ENCODE measurements at regions of chr3 and their contacts with region 1.

Region 1: GRCh38 chr3:16203031-16203430 is 28.6 kb downstream of the GALNT15 start:
- DNase-seq: no peak
- ATAC-seq: no peak
- H3K4me3 ChIP-seq: no peak overlapping the region
- H3K27ac ChIP-seq: no peak overlapping the region
- H3K4me1 ChIP-seq: no peaks in the 10 kb centered on the region
- H3K27me3 ChIP-seq: no peaks in the 10 kb centered on the region
- CTCF ChIP-seq: no peak

Region 2: GRCh38 chr3:16112910-16113504 is 90.0 kb before region 1 on chr3:
- intact Hi-C with region 1: no loop called
- DNase-seq: no peak
- ATAC-seq: peak; percentile 59 to 76 (median 70)
- H3K4me3 ChIP-seq: no peak overlapping the region
- H3K27ac ChIP-seq: peak overlapping the region; percentile 71
- H3K4me1 ChIP-seq: peaks cover 10% of the 10 kb centered on the region
- H3K27me3 ChIP-seq: no peaks in the 10 kb centered on the region
- CTCF ChIP-seq: no peak

Region 3: GRCh38 chr3:16173283-16174025 is 29.6 kb before region 1 on chr3:
- intact Hi-C with region 1: no loop called
- DNase-seq: no peak
- ATAC-seq: no peak
- H3K4me3 ChIP-seq: no peak overlapping the region
- H3K27ac ChIP-seq: peak overlapping the region; percentile 83
- H3K4me1 ChIP-seq: peaks cover 48% of the 10 kb centered on the region
- H3K27me3 ChIP-seq: no peaks in the 10 kb centered on the region
- CTCF ChIP-seq: no peak

Region 4: GRCh38 chr3:16183601-16184270 is 19.3 kb before region 1 on chr3:
- intact Hi-C with region 1: no loop called
- DNase-seq: no peak
- ATAC-seq: peak in 2 of 4 donors; percentile 39 to 53
- H3K4me3 ChIP-seq: no peak overlapping the region
- H3K27ac ChIP-seq: no peak overlapping the region
- H3K4me1 ChIP-seq: peaks cover 5% of the 10 kb centered on the region
- H3K27me3 ChIP-seq: no peaks in the 10 kb centered on the region
- CTCF ChIP-seq: no peak

Region 5: DNA sequence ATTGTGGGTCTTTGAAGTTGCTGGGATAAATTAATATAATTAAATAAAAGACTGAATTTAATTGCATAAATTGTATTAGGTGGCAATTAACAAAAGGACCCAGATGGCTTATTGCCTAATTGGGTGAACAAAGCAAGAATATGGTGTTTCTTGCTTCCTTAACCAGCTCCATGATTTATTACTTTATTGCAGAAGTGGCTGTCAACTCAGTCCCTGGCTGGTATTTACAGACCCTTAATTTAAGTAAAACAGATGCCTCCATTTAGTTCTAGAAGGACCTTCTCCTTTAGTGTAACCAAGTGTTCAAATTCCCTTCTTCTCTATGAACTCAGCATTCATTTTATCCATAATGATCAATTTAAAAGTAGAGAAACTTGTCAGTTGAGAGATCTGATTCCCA is 26.6 kb after region 1 on chr3:
- intact Hi-C with region 1: loop called in 1 of 2 experiments (anchors 1 kb)
- DNase-seq: no peak
- ATAC-seq: no peak
- H3K4me3 ChIP-seq: no peak overlapping the region
- H3K27ac ChIP-seq: no peak overlapping the region
- H3K4me1 ChIP-seq: no peaks in the 10 kb centered on the region
- H3K27me3 ChIP-seq: peaks cover 0 to 2% (median 0%) of the 10 kb centered on the region in 3 donors
- CTCF ChIP-seq: no peak

Region 6: DNA sequence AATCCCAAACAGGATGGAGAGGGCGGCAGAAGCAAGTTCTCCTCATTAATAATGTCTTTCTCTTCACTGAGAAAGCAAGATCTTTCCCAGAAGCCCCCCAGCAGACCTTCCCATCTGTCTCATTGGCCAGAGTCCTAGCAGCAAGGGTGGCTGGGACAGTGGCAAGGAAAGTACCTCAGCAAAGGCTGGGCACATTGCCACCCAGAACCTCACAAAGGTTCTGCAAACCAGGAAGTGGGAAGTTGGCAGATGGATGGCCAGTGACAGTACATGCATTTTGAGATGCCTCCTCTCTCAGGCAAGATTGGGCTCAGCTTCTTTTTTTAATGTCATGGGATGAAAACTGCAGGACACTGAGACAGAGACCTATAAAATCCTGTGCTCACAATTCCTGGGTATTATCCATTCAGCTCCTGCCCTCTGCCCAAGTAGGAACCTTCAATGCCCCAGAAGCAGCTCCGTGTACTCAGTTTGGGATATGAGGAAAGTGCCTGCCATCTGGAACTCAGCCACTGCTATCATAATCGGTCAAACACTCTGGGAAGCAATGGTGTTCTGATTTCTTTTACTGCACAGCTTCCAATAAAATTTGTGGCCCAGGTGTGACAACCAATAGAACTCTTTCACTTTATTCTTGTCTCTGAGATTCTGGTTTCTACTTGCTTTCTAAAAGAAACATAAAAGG is 36.2 kb after region 1 on chr3:
- intact Hi-C with region 1: loop called in 1 of 2 experiments (anchors 5 kb)
- DNase-seq: no peak
- ATAC-seq: no peak
- H3K4me3 ChIP-seq: no peak overlapping the region
- H3K27ac ChIP-seq: peak overlapping the region; percentile 56
- H3K4me1 ChIP-seq: peaks cover 24% of the 10 kb centered on the region
- H3K27me3 ChIP-seq: no peaks in the 10 kb centered on the region
- CTCF ChIP-seq: no peak

Region 7: DNA sequence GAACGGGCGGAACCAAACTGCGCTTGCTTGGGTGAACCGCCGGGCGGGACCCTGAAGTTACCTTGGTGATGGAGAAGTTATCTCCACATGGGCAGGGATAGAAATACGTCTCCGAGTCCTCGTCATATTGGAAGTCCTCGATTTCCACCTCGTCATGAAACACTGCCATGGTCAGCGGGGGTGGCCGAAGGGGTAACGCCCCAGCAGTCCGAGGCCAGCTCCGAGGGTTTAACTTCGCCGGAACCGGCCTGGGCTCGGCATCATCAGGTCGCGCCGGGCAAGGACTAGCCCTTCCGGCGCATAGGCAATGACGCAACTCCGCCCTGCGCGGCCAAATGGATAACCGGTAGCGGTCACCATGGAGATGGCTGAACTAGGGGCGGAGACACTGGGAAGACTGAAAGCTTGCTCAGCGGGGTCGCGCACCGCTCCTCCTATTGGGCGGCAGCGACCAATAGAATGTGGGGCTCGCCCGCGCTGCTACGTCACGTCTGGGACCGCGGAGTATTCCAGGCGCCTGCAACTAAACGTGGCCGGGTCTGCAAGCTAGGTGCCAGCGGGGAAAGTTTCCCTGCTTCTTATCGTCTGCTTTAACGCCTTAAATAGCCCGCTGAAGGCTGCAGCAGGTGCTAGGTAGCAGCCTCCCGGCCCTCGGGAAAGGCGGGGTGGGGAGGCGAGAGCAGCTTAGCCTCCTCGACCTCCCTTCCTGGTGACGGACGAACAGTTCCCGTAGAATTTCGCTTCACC is 61.9 kb after region 1 on chr3 and contains the starts of genes DPH3 and OXNAD1:
- intact Hi-C with region 1: no loop called
- DNase-seq: peak; percentile 100
- ATAC-seq: peak; percentile 97 to 99 (median 98)
- H3K4me3 ChIP-seq: peak within 1 kb of the TSS; percentile 74
- H3K27ac ChIP-seq: peak within 1 kb of the TSS; percentile 89
- H3K4me1 ChIP-seq: peaks cover 60% of the 10 kb centered on the region
- H3K27me3 ChIP-seq: no peaks in the 10 kb centered on the region
- CTCF ChIP-seq: peak; percentile 12
- total RNA-seq, gene DPH3: 23.5 to 53.3 (median 43.3) TPM
- total RNA-seq, gene OXNAD1: 5.4 to 15.5 (median 9.0) TPM

Measured in psoas muscle (tissue), 8 donors.